ENCODE measurements at regions of chr6 and their contacts with region 1.

Region 1: DNA sequence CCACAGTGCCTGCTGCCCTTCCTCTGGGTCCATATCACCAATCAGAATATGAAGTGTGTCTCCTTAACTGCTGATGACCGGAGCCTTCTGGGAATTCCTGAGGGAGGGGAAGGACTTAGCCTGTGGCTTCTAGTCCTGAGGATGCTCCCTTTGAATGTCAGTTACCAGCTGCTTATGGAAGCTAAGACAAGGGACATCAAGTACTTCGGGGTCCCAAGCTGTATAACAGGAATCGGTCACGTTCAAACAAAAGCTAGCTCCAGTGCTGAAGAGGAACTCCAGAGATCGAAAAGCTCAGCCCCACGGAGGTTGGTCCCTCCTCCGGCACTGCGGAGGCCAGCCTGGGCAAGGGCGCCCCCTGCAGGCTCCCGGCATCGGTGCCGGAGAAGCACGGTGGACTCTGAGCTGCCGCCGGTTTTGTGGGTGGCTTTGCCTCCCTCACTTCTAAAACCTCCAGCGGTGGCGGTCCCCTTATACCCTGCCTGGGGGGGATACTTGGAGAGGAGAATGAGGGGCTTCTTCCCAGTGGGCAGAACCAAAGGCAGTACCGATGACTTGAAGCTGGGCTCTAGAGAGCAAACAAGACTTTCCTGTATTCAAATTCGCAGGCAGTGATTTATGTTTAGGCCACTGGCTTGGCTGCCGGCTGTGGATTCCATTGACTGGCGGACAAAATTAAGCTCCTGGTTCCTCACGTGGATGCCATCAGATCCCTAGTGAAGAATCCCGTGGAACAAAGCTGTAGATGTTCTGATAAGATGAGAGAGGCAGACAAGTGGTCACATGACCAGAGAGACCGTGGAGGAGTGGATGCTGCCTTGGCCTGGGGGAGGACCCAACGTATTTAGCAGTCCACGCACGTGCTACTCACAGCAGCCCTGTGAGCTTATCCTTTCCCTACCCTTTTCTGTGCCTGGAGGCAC is 16.2 kb upstream of the UBR2 start:
- H3K4me3 ChIP-seq: peak overlapping the region; percentile 68
- H3K27ac ChIP-seq: no peak overlapping the region; the same call in 1 of the 2 replicates
- H3K4me1 ChIP-seq: no peaks in the 10 kb centered on the region
- CTCF ChIP-seq: peak; percentile 96

Region 2: GRCh38 chr6:42166444-42167141 is 381.1 kb before region 1 on chr6:
- CTCF ChIA-PET with region 1: interaction called, 18 read pairs
- POLR2A ChIA-PET with region 1: interaction called, 5 read pairs
- H3K4me3 ChIP-seq: no peak overlapping the region
- H3K27ac ChIP-seq: no peak overlapping the region
- H3K4me1 ChIP-seq: no peaks in the 10 kb centered on the region
- CTCF ChIP-seq: peak; percentile 86

Region 3: GRCh38 chr6:42230345-42231321 is 317.0 kb before region 1 on chr6:
- CTCF ChIA-PET with region 1: interaction called, 21 read pairs
- POLR2A ChIA-PET with region 1: interaction called, 3 read pairs
- H3K4me3 ChIP-seq: no peak overlapping the region
- H3K27ac ChIP-seq: no peak overlapping the region
- H3K4me1 ChIP-seq: peaks cover 14% of the 10 kb centered on the region
- CTCF ChIP-seq: peak; percentile 60; the same call in 1 of the 2 replicates

Region 4: GRCh38 chr6:42315991-42316378 is 231.7 kb before region 1 on chr6:
- CTCF ChIA-PET with region 1: interaction called, 22 read pairs
- POLR2A ChIA-PET with region 1: no interaction called
- H3K4me3 ChIP-seq: no peak overlapping the region
- H3K27ac ChIP-seq: no peak overlapping the region; the same call in 1 of the 2 replicates
- H3K4me1 ChIP-seq: peaks cover 13% of the 10 kb centered on the region
- CTCF ChIP-seq: no peak

Region 5: GRCh38 chr6:42440778-42441696 is 106.6 kb before region 1 on chr6:
- CTCF ChIA-PET with region 1: interaction called, 17 read pairs
- POLR2A ChIA-PET with region 1: no interaction called
- H3K4me3 ChIP-seq: no peak overlapping the region
- H3K27ac ChIP-seq: no peak overlapping the region
- H3K4me1 ChIP-seq: peaks cover 12% of the 10 kb centered on the region; the same call in 1 of the 2 replicates
- CTCF ChIP-seq: no peak

Region 6: GRCh38 chr6:42511803-42512422 is 35.8 kb before region 1 on chr6:
- CTCF ChIA-PET with region 1: interaction called, 10 read pairs
- POLR2A ChIA-PET with region 1: interaction called, 3 read pairs
- H3K4me3 ChIP-seq: no peak overlapping the region
- H3K27ac ChIP-seq: no peak overlapping the region
- H3K4me1 ChIP-seq: no peaks in the 10 kb centered on the region
- CTCF ChIP-seq: no peak

Region 7: DNA sequence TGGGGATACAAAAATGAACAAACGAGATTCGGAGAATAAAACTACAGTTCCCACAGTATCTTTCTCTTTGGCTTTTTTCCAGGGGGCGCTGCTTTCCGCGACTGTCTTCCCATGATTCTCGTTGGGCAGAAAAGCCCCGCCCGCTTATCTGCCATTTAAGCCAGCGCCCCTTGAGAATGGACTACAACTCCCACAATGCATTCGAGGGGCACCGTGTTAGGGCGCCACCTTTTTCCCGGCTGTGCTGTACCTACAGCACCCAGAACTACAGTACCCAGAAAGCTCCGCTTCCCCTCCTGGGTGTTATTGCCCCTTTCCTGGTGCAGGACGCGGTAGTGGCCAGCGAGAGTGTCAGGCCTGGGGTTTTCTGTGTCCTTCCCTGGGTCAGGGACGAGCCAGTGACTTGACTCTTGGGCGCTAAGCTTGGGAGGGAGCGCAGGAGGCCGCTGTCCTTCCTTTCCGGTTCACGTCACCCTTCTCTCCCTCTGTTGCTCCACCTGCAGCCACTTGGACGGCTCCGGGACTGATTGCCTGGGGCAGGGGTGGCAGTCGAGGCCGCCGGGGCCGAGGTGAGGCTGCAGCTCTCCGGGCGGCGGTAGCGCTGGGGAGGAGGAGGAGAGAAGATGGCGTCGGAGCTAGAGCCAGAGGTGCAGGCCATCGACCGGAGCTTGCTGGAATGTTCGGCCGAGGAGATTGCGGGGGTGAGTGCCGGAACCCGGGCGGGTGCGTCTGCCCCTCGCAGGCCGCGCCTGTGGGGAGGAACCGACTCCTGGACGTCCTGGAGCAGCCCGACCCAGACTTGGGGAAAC is 16.2 kb after region 1 on chr6 and contains the start of gene UBR2:
- CTCF ChIA-PET with region 1: interaction called, 123 read pairs
- POLR2A ChIA-PET with region 1: interaction called, 23 read pairs
- H3K4me3 ChIP-seq: peak within 1 kb of the TSS; percentile 82
- H3K27ac ChIP-seq: peak within 1 kb of the TSS; percentile 59
- H3K4me1 ChIP-seq: no peaks in the 10 kb centered on the region
- CTCF ChIP-seq: peak; percentile 96